Body of pancreas (tissue), 4 donors: ENCODE measurements at regions of chr1 and their contacts with region 1.

Region 1: GRCh38 chr1:69737527-69738185 is 169.9 kb downstream of the LRRC7 start:
- DNase-seq: peak; percentile 17 to 51 (median 24)
- ATAC-seq: peak; percentile 77
- H3K4me3 ChIP-seq: no peak overlapping the region
- H3K27ac ChIP-seq: no peak overlapping the region
- H3K4me1 ChIP-seq: peaks cover 6% of the 10 kb centered on the region
- H3K27me3 ChIP-seq: no peaks in the 10 kb centered on the region
- CTCF ChIP-seq: peak; percentile 37 to 76 (median 72)
- POLR2A ChIP-seq: no peak

Region 2: DNA sequence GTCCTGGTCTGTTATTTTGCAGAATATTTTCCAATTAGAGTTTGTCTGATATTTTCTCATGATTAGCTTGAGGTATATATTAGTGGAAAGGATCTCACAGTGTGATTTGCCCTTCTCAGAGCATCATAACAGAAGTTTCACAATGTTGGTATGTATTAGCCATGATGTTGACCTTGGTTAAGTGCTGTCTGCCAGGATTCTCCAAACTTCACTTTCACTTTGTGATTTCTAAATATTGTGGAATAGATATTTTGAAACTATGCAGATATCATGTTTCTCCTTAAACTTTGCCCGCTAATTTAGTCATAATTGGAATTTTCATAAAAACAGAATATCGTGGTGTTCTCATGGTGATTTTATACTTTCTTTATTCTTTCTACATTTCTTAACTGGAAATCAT is 1142.8 kb before region 1 on chr1:
- intact Hi-C with region 1: loop called (anchors 5 kb)
- DNase-seq: no peak
- ATAC-seq: no peak
- H3K4me3 ChIP-seq: no peak overlapping the region
- H3K27ac ChIP-seq: no peak overlapping the region
- H3K4me1 ChIP-seq: no peaks in the 10 kb centered on the region
- H3K27me3 ChIP-seq: no peaks in the 10 kb centered on the region
- CTCF ChIP-seq: no peak
- POLR2A ChIP-seq: no peak

Region 3: GRCh38 chr1:69657971-69658370 is 79.7 kb before region 1 on chr1:
- intact Hi-C with region 1: no loop called
- DNase-seq: no peak
- ATAC-seq: no peak
- H3K4me3 ChIP-seq: no peak overlapping the region
- H3K27ac ChIP-seq: no peak overlapping the region
- H3K4me1 ChIP-seq: no peaks in the 10 kb centered on the region
- H3K27me3 ChIP-seq: no peaks in the 10 kb centered on the region
- CTCF ChIP-seq: no peak
- POLR2A ChIP-seq: no peak

Region 4: GRCh38 chr1:70336050-70336449 is 598.4 kb after region 1 on chr1:
- intact Hi-C with region 1: no loop called
- DNase-seq: no peak
- ATAC-seq: no peak
- H3K4me3 ChIP-seq: no peak overlapping the region
- H3K27ac ChIP-seq: no peak overlapping the region
- H3K4me1 ChIP-seq: peaks cover 14% of the 10 kb centered on the region
- H3K27me3 ChIP-seq: no peaks in the 10 kb centered on the region
- CTCF ChIP-seq: no peak
- POLR2A ChIP-seq: no peak